ENCODE measurements at regions of chr15 and their contacts with region 1.

Region 1: GRCh38 chr15:40405501-40406381 is at the start of gene IVD:
- DNase-seq: peak; percentile 71
- H3K4me3 ChIP-seq: peak within 1 kb of the TSS; percentile 93
- CTCF ChIP-seq: no peak

Region 2: DNA sequence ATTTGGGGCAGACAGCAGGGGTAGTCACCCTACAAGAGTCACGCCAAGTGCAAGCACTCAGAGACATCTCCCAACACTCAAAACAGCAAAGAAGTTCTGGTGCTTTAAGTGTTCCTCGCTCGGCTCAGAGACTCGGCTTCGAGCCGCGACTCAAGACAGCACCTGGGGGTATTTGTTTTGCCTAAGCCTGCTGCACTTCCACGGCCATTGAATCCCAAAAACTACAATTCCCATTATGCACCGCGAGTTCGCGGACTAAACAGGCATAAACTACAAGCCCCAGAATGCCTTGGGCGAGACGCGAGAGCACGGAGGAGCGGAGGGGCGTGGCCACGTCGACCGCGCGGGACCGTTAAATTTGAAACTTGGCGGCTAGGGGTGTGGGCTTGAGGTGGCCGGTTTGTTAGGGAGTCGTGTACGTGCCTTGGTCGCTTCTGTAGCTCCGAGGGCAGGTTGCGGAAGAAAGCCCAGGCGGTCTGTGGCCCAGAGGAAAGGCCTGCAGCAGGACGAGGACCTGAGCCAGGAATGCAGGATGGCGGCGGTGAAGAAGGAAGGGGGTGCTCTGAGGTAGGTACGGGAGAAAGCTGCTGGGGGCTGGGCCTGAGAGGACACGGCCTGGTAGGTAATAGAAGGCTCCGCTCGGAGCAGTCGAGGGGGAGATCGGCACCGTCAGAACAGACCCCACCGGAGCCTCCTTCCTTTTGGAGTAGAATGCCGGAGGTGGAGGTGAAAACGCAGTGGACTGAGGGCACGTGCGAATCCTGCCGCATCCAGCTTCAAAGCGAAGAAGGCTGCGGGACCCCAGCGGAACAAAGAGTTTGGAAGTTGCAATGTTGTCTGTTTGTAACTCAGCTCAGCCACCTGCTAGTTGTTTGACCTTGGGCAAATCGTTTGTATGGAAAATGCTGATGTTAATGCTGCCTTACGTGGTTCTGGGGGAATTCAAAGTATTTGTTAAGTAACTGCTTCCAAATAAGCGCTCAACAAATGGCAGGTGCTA is 244.8 kb before region 1 on chr15 and contains the start of gene BUB1B:
- CTCF ChIA-PET with region 1: no interaction called
- POLR2A ChIA-PET with region 1: no interaction called
- DNase-seq: peak; percentile 28
- H3K4me3 ChIP-seq: peak within 1 kb of the TSS; percentile 94
- CTCF ChIP-seq: no peak

Region 3: GRCh38 chr15:40307421-40308211 is 98.1 kb before region 1 on chr15 and contains the start of gene PLCB2:
- CTCF ChIA-PET with region 1: interaction called, 12 read pairs
- POLR2A ChIA-PET with region 1: no interaction called
- DNase-seq: no peak
- H3K4me3 ChIP-seq: no peak within 1 kb of the TSS
- CTCF ChIP-seq: peak; percentile 52